Activated naive CD4-positive, alpha-beta T cell treated with anti-CD3 and anti-CD28 coated beads for 36 hours (primary cell): ENCODE measurements at regions of chr11 and their contacts with region 1.

Region 1: DNA sequence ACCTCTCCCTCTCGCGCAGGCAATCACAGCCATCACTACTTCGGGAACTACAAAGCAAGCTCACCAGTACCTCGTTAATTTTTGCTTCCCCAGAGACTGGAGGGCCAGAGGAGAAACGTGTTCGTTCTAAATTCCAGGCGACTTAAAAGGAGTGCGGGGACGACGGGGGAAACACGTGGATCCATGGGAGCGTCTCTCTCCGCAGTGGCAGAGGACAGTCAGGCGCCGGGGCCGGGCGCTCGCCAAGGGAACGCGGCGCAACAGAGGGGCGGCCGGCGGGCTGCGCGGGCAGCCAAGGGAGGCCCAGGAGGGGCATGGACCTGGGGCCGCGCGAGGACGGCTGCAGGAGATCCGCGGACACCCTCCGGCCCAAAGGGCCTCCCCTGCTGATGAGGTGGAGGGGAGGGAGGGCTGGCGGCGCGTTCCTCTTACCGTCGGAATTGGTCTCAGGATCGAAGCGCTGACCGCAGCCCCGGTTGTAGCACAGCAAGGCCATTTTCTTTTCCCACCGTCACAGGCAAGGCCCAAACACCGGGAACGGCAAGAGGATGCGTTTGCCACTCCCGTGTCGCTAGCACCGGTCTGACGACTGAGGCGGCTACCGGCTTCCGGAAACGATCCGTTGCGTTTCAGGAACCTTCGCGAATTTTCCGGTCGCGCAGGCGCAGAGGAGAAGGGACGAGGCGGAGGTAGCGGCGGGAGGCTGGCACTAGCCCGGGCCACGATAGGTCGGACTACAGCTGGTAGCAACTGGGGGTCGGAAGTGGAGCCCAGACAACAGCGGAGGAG is at the start of gene CHORDC1:
- DNase-seq: peak; percentile 93
- H3K4me3 Mint-ChIP-seq: peak within 1 kb of the TSS; percentile 98
- H3K27ac Mint-ChIP-seq: peak within 1 kb of the TSS; percentile 97
- H3K4me1 Mint-ChIP-seq: peaks cover 43% of the 10 kb centered on the region
- H3K27me3 Mint-ChIP-seq: no peaks in the 10 kb centered on the region
- total RNA-seq, gene CHORDC1: 49.8 to 49.9 TPM

Region 2: GRCh38 chr11:90204832-90205646 is 17.6 kb before region 1 on chr11:
- CTCF ChIA-PET with region 1: interaction called, 17 read pairs
- intact Hi-C with region 1: loop called (anchors 1 kb)
- DNase-seq: peak; percentile 14
- H3K4me3 Mint-ChIP-seq: no peak overlapping the region
- H3K27ac Mint-ChIP-seq: peak overlapping the region; percentile 7
- H3K4me1 Mint-ChIP-seq: peaks cover 20% of the 10 kb centered on the region
- H3K27me3 Mint-ChIP-seq: no peaks in the 10 kb centered on the region

Region 3: DNA sequence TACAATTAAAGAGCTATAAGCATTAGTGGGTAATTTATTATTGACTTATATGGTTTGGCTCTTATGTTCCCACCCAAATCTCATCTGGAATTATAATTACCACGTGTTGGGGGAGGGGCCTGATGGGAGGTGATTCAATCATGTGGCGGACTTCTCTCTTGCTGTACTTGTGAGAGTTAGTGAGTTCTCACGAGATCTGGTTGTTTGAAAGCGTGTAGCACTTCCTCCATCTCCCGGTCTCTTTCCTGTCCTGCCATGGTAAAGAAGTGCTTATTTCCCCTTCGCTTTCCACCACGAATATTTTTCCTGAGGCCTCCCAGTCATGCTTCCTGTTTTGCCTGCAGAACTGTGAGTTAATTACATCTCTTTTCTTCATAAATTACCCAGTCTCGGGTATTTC is 28.3 kb after region 1 on chr11:
- CTCF ChIA-PET with region 1: no interaction called
- intact Hi-C with region 1: loop called (anchors 1 kb)
- DNase-seq: peak; percentile 50
- H3K4me3 Mint-ChIP-seq: peak overlapping the region; percentile 74
- H3K27ac Mint-ChIP-seq: peak overlapping the region; percentile 34
- H3K4me1 Mint-ChIP-seq: peaks cover 16% of the 10 kb centered on the region
- H3K27me3 Mint-ChIP-seq: peaks cover 3% of the 10 kb centered on the region

Region 4: DNA sequence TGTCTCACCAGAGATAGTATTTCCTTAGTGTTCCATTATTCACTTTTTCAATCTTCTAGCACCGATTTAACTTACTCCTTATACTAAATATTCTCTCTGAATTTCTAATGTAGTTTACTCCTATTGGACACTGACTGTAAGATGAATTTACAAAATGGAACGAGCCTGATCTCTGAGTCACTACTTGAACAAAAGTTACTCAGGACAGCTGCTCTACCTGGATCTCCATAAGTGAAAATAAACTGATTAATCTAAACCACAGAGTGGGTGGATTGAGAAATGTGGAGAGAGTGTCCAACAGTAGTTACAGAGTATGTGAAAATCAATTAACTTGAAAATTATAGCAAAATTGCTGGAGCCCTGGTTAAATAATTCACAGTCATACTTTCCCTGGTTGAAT is 141.9 kb after region 1 on chr11:
- CTCF ChIA-PET with region 1: no interaction called
- intact Hi-C with region 1: no loop called
- DNase-seq: no peak
- H3K4me3 Mint-ChIP-seq: no peak overlapping the region
- H3K27ac Mint-ChIP-seq: no peak overlapping the region
- H3K4me1 Mint-ChIP-seq: no peaks in the 10 kb centered on the region
- H3K27me3 Mint-ChIP-seq: no peaks in the 10 kb centered on the region

Region 5: GRCh38 chr11:90447618-90448017 is 225.0 kb after region 1 on chr11:
- CTCF ChIA-PET with region 1: no interaction called
- intact Hi-C with region 1: no loop called
- DNase-seq: no peak
- H3K4me3 Mint-ChIP-seq: no peak overlapping the region
- H3K27ac Mint-ChIP-seq: no peak overlapping the region
- H3K4me1 Mint-ChIP-seq: peaks cover 11% of the 10 kb centered on the region
- H3K27me3 Mint-ChIP-seq: no peaks in the 10 kb centered on the region

Region 6: GRCh38 chr11:90855531-90855930 is 632.9 kb after region 1 on chr11:
- CTCF ChIA-PET with region 1: no interaction called
- intact Hi-C with region 1: no loop called
- DNase-seq: no peak
- H3K4me3 Mint-ChIP-seq: no peak overlapping the region
- H3K27ac Mint-ChIP-seq: no peak overlapping the region
- H3K4me1 Mint-ChIP-seq: no peaks in the 10 kb centered on the region
- H3K27me3 Mint-ChIP-seq: no peaks in the 10 kb centered on the region